Dorsolateral prefrontal cortex (tissue), 120 donors: ENCODE measurements at regions of chr3 and their contacts with region 1.

Region 1: GRCh38 chr3:169812332-169813235 is at the starts of genes LRRC34 and LRRIQ4:
- DNase-seq: peak; percentile 38 to 86 (median 75)
- H3K4me3 ChIP-seq: peak within 1 kb of the TSS; percentile 52 to 87 (median 73)
- H3K27ac ChIP-seq: peak within 1 kb of the TSS in 57 of 59 donors; percentile 10 to 90 (median 78)
- H3K27me3 ChIP-seq: no peaks in the 10 kb centered on the region
- CTCF ChIP-seq: peak in 1 of 56 donors; percentile 13
- total RNA-seq, gene LRRC34: 4.9 to 20.1 (median 11.4) TPM
- total RNA-seq, gene LRRIQ4: 0.23 to 1.8 (median 0.58) TPM in 100 of 120 experiments, not detected in the others

Region 2: DNA sequence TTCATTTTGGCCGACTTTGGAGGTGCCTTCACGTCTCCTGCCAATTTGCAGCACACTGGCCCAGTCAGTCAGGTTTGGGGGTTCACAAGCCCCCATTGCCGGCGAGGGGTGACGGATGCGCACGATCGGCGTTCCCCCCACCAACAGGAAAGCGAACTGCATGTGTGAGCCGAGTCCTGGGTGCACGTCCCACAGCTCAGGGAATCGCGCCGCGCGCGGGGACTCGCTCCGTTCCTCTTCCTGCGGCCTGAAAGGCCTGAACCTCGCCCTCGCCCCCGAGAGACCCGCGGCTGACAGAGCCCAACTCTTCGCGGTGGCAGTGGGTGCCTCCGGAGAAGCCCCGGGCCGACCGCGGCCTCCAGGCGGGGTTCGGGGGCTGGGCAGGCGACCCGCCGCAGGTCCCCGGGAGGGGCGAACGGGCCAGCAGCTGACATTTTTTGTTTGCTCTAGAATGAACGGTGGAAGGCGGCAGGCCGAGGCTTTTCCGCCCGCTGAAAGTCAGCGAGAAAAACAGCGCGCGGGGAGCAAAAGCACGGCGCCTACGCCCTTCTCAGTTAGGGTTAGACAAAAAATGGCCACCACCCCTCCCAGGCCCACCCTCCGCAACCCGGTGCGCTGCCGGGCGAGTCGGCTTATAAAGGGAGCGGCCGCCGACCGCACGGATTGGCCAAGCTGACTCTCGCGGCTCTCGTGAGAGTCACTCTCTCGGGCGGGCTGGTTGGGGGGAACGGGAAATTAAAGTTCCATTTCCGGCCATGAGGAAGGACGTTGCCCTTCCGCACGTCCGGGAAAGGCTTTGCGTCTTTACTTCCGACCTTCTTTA is 47.9 kb before region 1 on chr3 and contains the start of gene TERC:
- intact Hi-C with region 1: loop called in 1 of 2 experiments (anchors 10 kb)
- DNase-seq: peak; percentile 81 to 96 (median 91)
- H3K4me3 ChIP-seq: peak within 1 kb of the TSS; percentile 63 to 98 (median 89)
- H3K27ac ChIP-seq: peak within 1 kb of the TSS; percentile 86 to 100 (median 97)
- H3K27me3 ChIP-seq: no peaks in the 10 kb centered on the region
- CTCF ChIP-seq: peak in 14 of 56 donors; percentile 4 to 28 (median 12)
- total RNA-seq, gene TERC: 1.6 to 15.3 (median 4.5) TPM in 78 of 120 experiments, not detected in the others

Region 3: GRCh38 chr3:169772897-169773828 is 39.4 kb before region 1 on chr3 and contains the start of gene MYNN:
- intact Hi-C with region 1: loop called (anchors 5 to 10 kb)
- DNase-seq: peak; percentile 91 to 96 (median 94)
- H3K4me3 ChIP-seq: peak within 1 kb of the TSS; percentile 71 to 100 (median 92)
- H3K27ac ChIP-seq: peak within 1 kb of the TSS; percentile 91 to 100 (median 99)
- H3K27me3 ChIP-seq: no peaks in the 10 kb centered on the region
- CTCF ChIP-seq: peak in 11 of 56 donors; percentile 6 to 27 (median 18)
- total RNA-seq, gene MYNN: 9.5 to 20.4 (median 13.4) TPM